Activated CD4-positive, alpha-beta memory T cell treated with anti-CD3 and anti-CD28 coated beads, Interleukin-2, amount 10 ng/mL, durations not matched to agents 7 days and 5 days (primary cell): ENCODE measurements at regions of chr6 and their contacts with region 1.

Region 1: GRCh38 chr6:129748212-129748900 is 38.4 kb upstream of the ARHGAP18 start:
- DNase-seq: peak; percentile 67
- H3K4me3 Mint-ChIP-seq: peak overlapping the region; percentile 56
- H3K27ac Mint-ChIP-seq: peak overlapping the region; percentile 85
- H3K4me1 Mint-ChIP-seq: peaks cover 53% of the 10 kb centered on the region
- H3K27me3 Mint-ChIP-seq: no peaks in the 10 kb centered on the region

Region 2: GRCh38 chr6:129498950-129499842 is 249.2 kb before region 1 on chr6:
- CTCF ChIA-PET with region 1: interaction called, 22 read pairs
- POLR2A ChIA-PET with region 1: interaction called, 3 read pairs
- DNase-seq: no peak
- H3K4me3 Mint-ChIP-seq: peak overlapping the region; percentile 18
- H3K27ac Mint-ChIP-seq: no peak overlapping the region
- H3K4me1 Mint-ChIP-seq: peaks cover 34% of the 10 kb centered on the region
- H3K27me3 Mint-ChIP-seq: no peaks in the 10 kb centered on the region

Region 3: DNA sequence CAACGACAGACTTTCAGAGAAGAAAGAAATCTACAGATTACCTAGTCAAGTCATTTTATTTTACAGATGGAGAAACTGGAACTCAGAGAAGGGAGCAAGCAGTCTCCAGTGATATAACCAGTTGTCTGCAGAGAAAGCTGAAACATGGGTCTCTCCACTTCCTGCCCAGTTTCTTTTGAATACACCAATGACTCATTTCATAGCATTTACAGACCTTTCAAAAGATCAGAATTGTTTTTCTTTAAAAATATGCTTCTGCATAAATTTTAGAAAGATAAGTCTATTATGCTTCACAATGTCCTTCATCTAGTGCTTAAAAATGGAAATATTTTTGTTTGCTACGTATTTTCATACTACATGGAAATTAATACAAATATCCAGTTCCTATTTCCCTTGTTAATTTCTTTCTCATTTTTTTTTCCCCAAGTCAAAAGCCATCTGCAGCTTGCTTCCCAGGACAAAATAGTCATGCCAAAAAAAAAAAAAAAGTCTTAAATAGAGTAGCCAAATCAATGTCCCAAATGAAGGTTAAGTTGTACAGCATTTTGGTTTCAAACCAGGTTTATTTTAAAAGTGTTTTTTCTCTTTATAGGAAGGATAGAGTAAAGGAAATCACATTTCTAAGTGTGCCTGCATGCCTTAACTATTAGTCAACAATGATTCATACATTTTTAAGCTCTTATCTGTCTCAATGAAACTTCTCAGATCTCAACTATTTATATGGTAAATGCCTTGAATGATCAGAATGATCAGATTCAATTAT is 75.3 kb before region 1 on chr6:
- CTCF ChIA-PET with region 1: interaction called, 9 read pairs
- POLR2A ChIA-PET with region 1: interaction called, 14 read pairs
- DNase-seq: peak; percentile 34
- H3K4me3 Mint-ChIP-seq: peak overlapping the region; percentile 68
- H3K27ac Mint-ChIP-seq: peak overlapping the region; percentile 92
- H3K4me1 Mint-ChIP-seq: peaks cover 63% of the 10 kb centered on the region
- H3K27me3 Mint-ChIP-seq: no peaks in the 10 kb centered on the region

Region 4: DNA sequence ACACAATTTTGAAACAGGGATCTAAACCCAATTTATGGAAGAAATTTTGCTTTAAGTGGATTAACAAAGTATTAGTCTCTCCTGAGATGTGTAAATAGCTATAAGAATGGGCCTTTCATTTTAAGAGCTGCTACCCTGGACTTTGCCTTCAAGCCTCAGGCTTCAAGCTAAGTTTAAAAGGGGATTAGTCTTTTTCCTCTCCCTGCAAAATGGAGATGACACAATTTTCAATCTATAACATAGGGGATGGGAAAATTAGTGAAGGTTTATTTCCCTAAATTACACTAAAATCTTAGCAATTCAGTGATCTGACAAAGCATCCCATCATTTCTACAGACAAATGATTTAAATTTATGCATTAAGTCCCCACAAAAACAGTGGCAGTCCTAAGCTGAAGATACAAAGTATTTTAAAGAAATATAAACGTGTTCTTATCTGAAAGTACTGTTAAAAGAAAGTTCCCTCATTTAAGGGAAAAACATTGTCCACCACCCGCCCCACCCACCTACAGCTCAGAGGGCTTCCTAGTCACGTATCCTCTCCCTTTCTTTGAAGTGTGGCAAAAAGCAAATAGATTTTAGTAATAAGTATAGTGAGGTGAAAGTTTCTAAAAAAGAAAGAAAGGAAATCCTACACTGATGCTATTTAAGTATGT is 52.9 kb before region 1 on chr6:
- CTCF ChIA-PET with region 1: no interaction called
- POLR2A ChIA-PET with region 1: no interaction called
- DNase-seq: peak; percentile 42
- H3K4me3 Mint-ChIP-seq: peak overlapping the region; percentile 12
- H3K27ac Mint-ChIP-seq: peak overlapping the region; percentile 18
- H3K4me1 Mint-ChIP-seq: peaks cover 41% of the 10 kb centered on the region
- H3K27me3 Mint-ChIP-seq: peaks cover 5% of the 10 kb centered on the region

Region 5: DNA sequence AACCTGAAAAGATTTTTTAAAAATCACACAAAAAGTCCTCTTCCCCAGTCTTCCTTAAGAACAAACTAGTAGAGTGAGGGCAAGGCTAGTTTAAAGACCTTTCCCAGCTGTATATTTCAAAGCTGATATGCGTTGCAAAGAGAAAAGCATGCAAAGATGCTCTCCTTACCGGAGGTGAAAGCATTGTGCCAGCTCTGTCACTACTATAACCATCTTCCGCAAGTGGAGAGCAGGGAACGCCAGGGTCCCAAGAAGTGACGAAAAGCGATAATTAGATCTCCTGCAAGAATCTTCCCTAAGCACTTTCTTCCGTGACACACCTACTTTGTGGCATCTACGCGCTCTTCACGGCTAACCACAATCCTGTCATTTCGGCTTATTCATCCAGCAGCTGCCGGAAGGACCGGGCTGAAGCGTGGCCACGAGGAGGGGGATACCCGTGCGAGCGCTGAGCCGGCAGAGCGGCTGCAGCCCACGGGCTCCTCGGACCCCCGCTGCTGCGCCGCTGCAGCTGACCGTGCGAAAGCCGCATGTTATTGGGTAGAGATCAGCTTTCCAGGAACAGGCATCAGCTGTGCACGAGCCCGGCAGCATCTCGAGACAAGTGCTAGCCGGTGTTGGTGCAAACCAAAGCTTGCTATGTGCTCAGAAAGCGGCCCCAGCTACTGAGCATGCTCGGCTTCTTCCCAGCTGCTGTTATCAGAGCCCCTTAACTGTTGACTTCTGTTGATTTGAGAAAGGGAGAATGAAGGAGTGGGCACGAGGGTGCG is 18.8 kb after region 1 on chr6:
- CTCF ChIA-PET with region 1: interaction called, 4 read pairs
- POLR2A ChIA-PET with region 1: interaction called, 10 read pairs
- DNase-seq: peak; percentile 79
- H3K4me3 Mint-ChIP-seq: peak overlapping the region; percentile 70
- H3K27ac Mint-ChIP-seq: peak overlapping the region; percentile 9
- H3K4me1 Mint-ChIP-seq: peaks cover 30% of the 10 kb centered on the region
- H3K27me3 Mint-ChIP-seq: peaks cover 65% of the 10 kb centered on the region